ENCODE measurements at regions of chr9 and their contacts with region 1.

Region 1: GRCh38 chr9:32378993-32379729 is 5.3 kb upstream of the ACO1 start:
- DNase-seq: peak; percentile 63
- H3K4me3 ChIP-seq: no peak overlapping the region; the same call in 1 of the 2 replicates
- H3K27ac ChIP-seq: no peak overlapping the region
- H3K27me3 ChIP-seq: no peaks in the 10 kb centered on the region
- CTCF ChIP-seq: peak; percentile 88

Region 2: DNA sequence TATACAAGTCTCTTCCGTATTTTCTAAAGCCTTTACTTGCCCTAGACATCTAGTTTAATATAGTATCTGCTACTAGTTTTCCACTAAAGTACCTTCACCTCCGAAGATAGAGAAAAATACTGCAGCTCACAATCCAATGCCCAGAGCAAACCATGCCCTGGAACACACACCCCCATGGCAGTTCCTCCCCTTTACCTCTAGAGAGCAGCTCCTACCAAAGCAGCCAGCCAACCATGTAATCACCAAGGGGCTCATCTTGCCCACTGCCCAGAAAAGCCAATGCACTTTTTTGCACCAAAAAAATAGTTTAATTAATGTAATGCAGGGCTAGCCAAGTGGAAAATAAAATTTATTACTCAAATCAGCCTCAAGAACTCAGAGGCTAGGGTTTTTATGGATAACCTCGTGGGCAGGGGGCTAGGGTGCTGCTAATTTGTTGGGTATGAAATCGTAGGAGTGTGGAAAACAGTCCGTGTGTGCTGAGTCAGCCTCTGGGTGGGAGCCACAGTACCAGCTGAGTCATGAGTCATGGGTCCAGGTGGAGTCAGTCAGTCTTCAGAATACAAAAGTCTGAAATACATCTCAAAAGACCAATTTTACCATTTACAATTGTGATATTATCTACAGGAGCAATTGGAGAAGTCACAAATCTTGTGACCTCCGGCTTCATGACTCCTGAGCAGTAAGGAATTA is 114.8 kb before region 1 on chr9:
- CTCF ChIA-PET with region 1: no interaction called
- POLR2A ChIA-PET with region 1: no interaction called
- DNase-seq: no peak
- H3K4me3 ChIP-seq: no peak overlapping the region
- H3K27ac ChIP-seq: no peak overlapping the region
- H3K27me3 ChIP-seq: no peaks in the 10 kb centered on the region
- CTCF ChIP-seq: no peak

Region 3: DNA sequence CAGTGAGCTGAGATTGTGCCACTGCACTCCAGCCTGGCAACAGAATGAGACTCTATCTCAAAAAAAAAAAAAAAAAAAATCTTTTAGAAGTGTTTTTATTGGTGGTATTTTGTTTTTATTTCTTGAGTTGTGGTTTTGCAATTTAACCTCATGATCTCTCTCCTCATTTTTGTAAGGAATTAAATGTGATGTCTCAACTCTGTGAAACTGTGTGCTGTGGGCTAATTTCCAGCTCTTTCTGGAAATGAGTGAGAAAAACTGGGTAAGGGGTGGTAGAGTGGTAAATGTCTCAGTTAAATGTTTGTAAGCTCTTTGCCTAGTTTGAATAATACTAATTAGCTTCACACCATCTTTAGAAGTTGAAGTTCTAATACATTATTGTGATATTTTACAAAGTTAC is 34.3 kb after region 1 on chr9:
- CTCF ChIA-PET with region 1: interaction called, 19 read pairs
- POLR2A ChIA-PET with region 1: no interaction called
- DNase-seq: no peak
- H3K4me3 ChIP-seq: no peak overlapping the region
- H3K27ac ChIP-seq: no peak overlapping the region
- H3K27me3 ChIP-seq: no peaks in the 10 kb centered on the region
- CTCF ChIP-seq: no peak

Region 4: GRCh38 chr9:32442433-32442832 is 63.3 kb after region 1 on chr9:
- CTCF ChIA-PET with region 1: interaction called, 133 read pairs
- POLR2A ChIA-PET with region 1: no interaction called
- DNase-seq: no peak
- H3K4me3 ChIP-seq: no peak overlapping the region
- H3K27ac ChIP-seq: no peak overlapping the region
- H3K27me3 ChIP-seq: no peaks in the 10 kb centered on the region
- CTCF ChIP-seq: no peak

Region 5: DNA sequence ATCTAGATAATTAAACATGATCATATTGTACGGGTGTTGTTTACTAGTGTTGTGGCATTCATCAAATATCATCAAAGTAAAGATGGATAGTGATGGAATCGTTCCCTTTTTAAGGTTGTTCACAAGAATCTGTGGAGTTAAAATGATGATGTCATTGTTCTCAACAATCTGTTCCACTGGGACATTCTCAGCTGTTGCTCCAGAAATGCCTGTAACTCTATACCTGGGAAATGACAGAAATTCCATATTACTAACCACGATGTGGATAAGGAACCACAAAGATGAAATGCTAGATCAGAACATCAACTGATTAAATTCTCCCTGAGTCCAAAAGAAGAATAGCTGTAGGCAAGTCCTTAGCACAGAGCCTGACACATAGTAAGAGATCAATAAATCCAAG is 108.8 kb after region 1 on chr9:
- CTCF ChIA-PET with region 1: interaction called, 15 read pairs
- POLR2A ChIA-PET with region 1: no interaction called
- DNase-seq: peak; percentile 21
- H3K4me3 ChIP-seq: no peak overlapping the region
- H3K27ac ChIP-seq: no peak overlapping the region
- H3K27me3 ChIP-seq: no peaks in the 10 kb centered on the region
- CTCF ChIP-seq: no peak

Region 6: GRCh38 chr9:32543047-32543446 is 163.9 kb after region 1 on chr9:
- CTCF ChIA-PET with region 1: interaction called, 106 read pairs
- POLR2A ChIA-PET with region 1: no interaction called
- DNase-seq: no peak
- H3K4me3 ChIP-seq: no peak overlapping the region
- H3K27ac ChIP-seq: no peak overlapping the region
- H3K27me3 ChIP-seq: no peaks in the 10 kb centered on the region
- CTCF ChIP-seq: no peak

Region 7: GRCh38 chr9:32566770-32567169 is 187.6 kb after region 1 on chr9:
- CTCF ChIA-PET with region 1: interaction called, 1,261 read pairs
- POLR2A ChIA-PET with region 1: interaction called, 8 read pairs
- DNase-seq: no peak
- H3K4me3 ChIP-seq: no peak overlapping the region
- H3K27ac ChIP-seq: no peak overlapping the region
- H3K27me3 ChIP-seq: no peaks in the 10 kb centered on the region
- CTCF ChIP-seq: no peak

Region 8: GRCh38 chr9:32968101-32969011 is 589.2 kb after region 1 on chr9:
- CTCF ChIA-PET with region 1: interaction called, 133 read pairs
- POLR2A ChIA-PET with region 1: no interaction called
- DNase-seq: no peak
- H3K4me3 ChIP-seq: no peak overlapping the region
- H3K27ac ChIP-seq: no peak overlapping the region
- H3K27me3 ChIP-seq: no peaks in the 10 kb centered on the region
- CTCF ChIP-seq: peak; percentile 81

Measured in AG04450 (cell line).